ENCODE measurements at regions of chr9 and their contacts with region 1.

Region 1: DNA sequence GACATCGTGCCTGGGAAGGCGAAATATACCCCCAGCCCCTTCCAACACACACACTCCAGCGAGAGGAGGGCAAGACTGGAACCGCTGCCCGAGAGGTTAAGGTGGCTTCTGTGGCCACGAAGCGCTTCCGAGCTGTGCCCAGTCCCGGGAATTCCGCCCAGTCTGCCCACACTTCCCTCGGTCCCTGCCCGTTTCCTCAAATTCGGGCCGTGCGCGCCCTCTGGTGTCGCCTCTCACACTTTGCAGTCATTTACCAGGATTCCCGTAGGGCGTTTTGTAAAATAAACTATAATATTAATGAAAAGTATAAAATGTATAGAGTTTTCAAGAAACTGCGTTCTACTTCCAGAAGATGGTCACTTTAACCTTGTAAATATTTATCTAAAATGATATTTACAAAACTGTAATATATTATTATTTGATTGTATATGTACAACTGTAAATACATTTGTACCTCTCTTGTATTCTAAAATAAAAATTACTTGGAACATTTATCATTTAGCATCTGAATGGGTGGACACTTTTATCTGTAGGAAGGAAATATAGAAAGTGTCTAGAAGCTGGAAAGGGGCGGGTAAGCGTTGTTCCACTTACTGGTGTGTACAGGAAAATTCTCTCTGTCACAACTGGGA is 11.0 kb upstream of the EXOSC2 start:
- DNase-seq: peak; percentile 83
- ATAC-seq: peak; percentile 80 to 81

Region 2: DNA sequence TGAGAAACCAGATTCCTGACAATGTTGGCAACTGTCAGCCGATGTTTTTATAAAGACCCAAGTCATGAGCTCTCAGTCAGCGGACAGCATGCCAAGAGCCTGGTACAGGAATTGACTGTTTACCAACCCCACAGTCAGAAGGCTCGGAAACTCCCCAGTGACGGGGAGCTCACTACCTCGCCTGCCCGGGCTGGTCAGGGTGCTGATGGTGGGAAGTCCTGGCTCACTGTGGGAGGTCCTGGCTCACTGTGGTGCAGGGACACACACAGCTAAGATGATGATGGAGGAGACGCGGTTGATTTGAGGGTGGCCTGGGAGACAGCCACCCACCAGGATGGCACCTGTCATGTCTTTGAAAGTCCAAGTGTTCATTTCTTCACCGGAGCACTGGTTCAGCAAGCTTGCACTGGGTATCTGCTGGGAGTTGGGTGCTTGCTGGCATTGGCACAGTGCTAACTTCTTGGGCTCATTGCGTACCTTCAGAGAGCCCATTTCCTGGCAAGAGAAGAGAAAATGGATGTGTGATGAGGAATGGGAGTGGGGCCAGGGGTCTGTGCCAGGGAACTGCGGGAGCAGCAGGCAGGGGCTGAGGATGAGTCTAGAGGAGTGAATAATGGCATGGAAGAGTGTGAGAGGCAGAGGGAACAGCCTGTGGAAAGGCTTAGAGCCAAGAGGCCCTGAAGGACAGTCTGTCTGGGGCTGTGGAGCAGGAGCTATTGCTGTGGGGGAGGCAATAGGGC is 222.5 kb before region 1 on chr9:
- intact Hi-C with region 1: loop called (anchors 1 to 2 kb)
- DNase-seq: no peak
- ATAC-seq: peak in 1 of 2 donors; percentile 7

Region 3: GRCh38 chr9:130578865-130579737 is 103.5 kb before region 1 on chr9 and contains the start of gene FUBP3:
- intact Hi-C with region 1: loop called in 1 of 2 experiments (anchors 5 kb)
- DNase-seq: peak; percentile 96
- ATAC-seq: peak; percentile 98
- total RNA-seq, gene FUBP3: 22.4 to 34.8 TPM

Region 4: GRCh38 chr9:130626249-130626992 is 56.2 kb before region 1 on chr9:
- intact Hi-C with region 1: loop called in 1 of 2 experiments (anchors 5 kb)
- DNase-seq: peak; percentile 41
- ATAC-seq: peak in 1 of 2 donors; percentile 27

Region 5: GRCh38 chr9:130701056-130702022 is 18.7 kb after region 1 on chr9:
- intact Hi-C with region 1: no loop called
- DNase-seq: peak; percentile 88
- ATAC-seq: peak; percentile 92 to 96

Measured in left cardiac atrium (tissue), 4 donors.